Left ventricle myocardium superior (tissue), 1 donor: ENCODE measurements at regions of chr20 and their contacts with region 1.

Region 1: GRCh38 chr20:56395166-56395565 is 2.7 kb downstream of the CSTF1 start:
- DNase-seq: no peak
- ATAC-seq: no peak

Region 2: DNA sequence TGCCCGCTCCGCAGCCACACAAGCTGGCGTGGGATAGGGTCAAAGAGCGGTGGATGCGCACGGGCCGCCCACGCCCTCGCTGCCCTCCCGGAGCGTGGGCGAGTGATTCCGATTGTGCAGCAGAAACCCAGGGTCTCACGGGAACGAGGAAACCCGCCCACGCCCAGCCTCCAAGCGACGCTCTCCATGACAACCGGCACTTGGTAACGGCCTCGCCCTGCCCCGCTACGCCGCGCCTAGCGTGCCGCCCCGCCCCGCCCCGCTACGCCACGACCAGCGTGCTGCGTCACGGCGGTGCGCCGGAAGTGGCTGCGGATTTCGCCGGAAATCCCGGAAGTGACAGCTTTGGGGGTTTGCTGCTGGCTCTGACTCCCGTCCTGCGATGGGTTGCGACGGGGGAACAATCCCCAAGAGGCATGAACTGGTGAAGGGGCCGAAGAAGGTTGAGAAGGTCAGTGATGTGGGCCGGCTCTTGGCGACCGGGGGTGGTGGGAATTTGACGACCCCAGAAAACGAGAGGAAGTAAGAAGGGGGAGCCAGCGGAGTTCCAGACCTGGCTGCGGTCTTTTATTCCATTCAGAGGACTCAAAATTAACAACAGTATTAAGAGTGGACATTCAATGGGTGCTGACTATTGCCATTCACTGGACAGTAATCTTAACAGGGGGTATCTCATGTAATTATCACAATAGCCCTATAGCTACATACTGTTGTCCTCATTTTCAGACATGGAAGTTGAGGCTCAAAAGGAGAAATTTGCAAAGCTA is 73.3 kb after region 1 on chr20 and contains the start of gene RTF2:
- intact Hi-C with region 1: loop called (anchors 5 kb)
- DNase-seq: peak; percentile 96
- ATAC-seq: peak; percentile 100
- total RNA-seq, gene RTF2: 82.4 TPM